Esophagus muscularis mucosa (tissue), 4 donors: ENCODE measurements at regions of chr20 and their contacts with region 1.

Region 1: GRCh38 chr20:1466211-1467081 is at the start of gene NSFL1C:
- DNase-seq: peak; percentile 96
- H3K4me3 ChIP-seq: peak within 1 kb of the TSS; percentile 77 to 95 (median 85)
- H3K27ac ChIP-seq: peak within 1 kb of the TSS; percentile 76 to 89 (median 83)
- H3K4me1 ChIP-seq: peaks cover 36 to 63% (median 51%) of the 10 kb centered on the region in 4 donors
- H3K27me3 ChIP-seq: no peaks in the 10 kb centered on the region
- CTCF ChIP-seq: peak in 2 of 3 experiments; percentile 93 to 96
- EP300 ChIP-seq: no peak
- POLR2A ChIP-seq: peak; percentile 43
- total RNA-seq, gene NSFL1C: 33.6 to 62.4 (median 43.6) TPM

Region 2: DNA sequence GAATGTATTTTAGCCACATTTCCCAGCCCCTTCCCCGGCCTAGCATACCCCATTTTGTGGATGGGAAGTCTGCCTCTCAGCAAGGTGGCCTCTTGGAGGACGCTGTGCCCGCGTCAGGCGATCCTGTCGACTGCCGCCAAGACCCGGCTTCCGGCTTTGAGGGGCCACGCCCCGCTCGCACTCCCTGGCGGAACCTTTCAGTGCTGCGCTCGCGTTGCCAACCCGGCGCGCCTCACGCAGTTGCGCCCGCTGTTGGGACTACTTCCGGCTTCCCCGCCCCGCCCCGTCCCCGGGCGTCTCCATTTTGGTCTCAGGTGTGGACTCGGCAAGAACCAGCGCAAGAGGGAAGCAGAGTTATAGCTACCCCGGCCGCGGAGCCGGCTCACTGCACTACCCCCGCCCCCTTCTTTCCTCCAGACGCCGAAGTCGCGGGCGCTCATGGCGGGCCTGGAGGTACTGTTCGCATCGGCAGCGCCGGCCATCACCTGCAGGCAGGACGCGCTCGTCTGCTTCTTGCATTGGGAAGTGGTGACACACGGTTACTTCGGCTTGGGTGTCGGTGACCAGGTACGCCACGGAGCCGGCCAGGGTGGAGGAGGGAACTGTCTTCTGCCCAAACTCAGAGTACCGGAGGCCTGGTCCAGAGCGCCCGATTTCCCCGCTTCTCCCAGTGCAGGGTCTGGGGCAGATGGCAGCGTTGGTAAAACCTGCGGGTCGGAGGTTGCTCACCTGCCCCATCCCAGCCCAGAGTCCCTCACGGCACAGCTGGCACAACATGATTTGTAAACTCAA is 347.9 kb before region 1 on chr20 and contains the start of gene PSMF1:
- intact Hi-C with region 1: loop called (anchors 5 kb)
- DNase-seq: peak; percentile 98
- H3K4me3 ChIP-seq: peak within 1 kb of the TSS; percentile 81 to 99 (median 89)
- H3K27ac ChIP-seq: peak within 1 kb of the TSS; percentile 75 to 83 (median 82)
- H3K4me1 ChIP-seq: peaks cover 51 to 54% (median 54%) of the 10 kb centered on the region in 4 donors
- H3K27me3 ChIP-seq: no peaks in the 10 kb centered on the region
- CTCF ChIP-seq: peak in 1 of 3 experiments; percentile 36
- EP300 ChIP-seq: no peak
- POLR2A ChIP-seq: no peak
- total RNA-seq, gene PSMF1: 65.4 to 91.5 (median 73.4) TPM

Region 3: DNA sequence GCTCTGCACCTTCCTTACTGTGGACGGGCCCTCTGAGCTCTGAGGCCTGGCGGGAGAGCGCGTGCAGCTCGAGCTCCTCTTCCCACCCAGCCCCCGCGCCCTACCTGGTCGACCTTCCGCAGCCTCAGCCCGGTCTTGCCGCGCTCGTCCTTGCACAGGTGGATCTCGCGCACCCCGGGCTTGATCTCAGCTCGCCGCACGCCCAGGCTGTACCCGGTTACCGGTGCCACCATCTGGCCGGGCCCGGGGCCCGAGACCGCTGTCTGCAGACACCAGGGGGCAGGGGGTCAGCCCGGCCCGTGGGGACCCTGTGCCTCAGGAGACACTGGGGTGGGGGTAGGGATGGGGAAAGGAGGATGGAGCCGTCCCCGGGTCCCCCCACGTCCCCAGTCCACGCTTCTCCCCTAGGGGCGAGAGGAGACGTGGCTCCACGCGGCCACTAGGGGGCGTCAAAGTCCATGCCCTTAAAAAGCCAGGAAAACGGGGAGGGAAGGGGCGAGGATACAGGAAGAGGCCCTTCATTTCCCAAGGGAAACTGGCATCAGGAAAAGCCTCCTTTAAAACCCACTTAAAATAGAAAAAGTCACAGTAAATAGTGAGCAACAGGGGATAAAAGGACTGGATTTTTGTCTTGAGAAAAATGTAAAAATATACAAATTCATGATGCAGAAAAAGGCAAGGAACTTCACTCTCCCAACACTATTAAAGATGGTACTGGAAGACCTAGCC is 153.0 kb before region 1 on chr20:
- intact Hi-C with region 1: loop called (anchors 2 kb)
- DNase-seq: peak; percentile 94
- H3K4me3 ChIP-seq: peak overlapping the region; percentile 34 to 52 (median 40)
- H3K27ac ChIP-seq: no peak overlapping the region
- H3K4me1 ChIP-seq: peaks cover 11 to 13% (median 12%) of the 10 kb centered on the region in 4 donors
- H3K27me3 ChIP-seq: no peaks in the 10 kb centered on the region
- CTCF ChIP-seq: peak; percentile 95 to 98 (median 97)
- EP300 ChIP-seq: no peak
- POLR2A ChIP-seq: no peak

Region 4: GRCh38 chr20:1325173-1326030 is 141.0 kb before region 1 on chr20:
- intact Hi-C with region 1: loop called (anchors 5 kb)
- DNase-seq: peak; percentile 99
- H3K4me3 ChIP-seq: peak overlapping the region; percentile 70 to 89 (median 78)
- H3K27ac ChIP-seq: peak overlapping the region; percentile 93 to 99 (median 96)
- H3K4me1 ChIP-seq: peaks cover 59 to 74% (median 66%) of the 10 kb centered on the region in 4 donors
- H3K27me3 ChIP-seq: peaks cover 0 to 9% (median 0%) of the 10 kb centered on the region in 4 donors
- CTCF ChIP-seq: peak in 2 of 3 experiments; percentile 25 to 40
- EP300 ChIP-seq: no peak
- POLR2A ChIP-seq: peak; percentile 94

Region 5: GRCh38 chr20:1392823-1393506 is 73.5 kb before region 1 on chr20 and contains the start of gene FKBP1A:
- intact Hi-C with region 1: loop called (anchors 5 kb)
- DNase-seq: peak; percentile 96
- H3K4me3 ChIP-seq: peak within 1 kb of the TSS; percentile 73 to 98 (median 80)
- H3K27ac ChIP-seq: peak within 1 kb of the TSS; percentile 79 to 89 (median 84)
- H3K4me1 ChIP-seq: peaks cover 40 to 53% (median 51%) of the 10 kb centered on the region in 4 donors
- H3K27me3 ChIP-seq: peaks cover 0 to 12% (median 0%) of the 10 kb centered on the region in 4 donors
- CTCF ChIP-seq: peak in 2 of 3 experiments; percentile 23 to 29
- EP300 ChIP-seq: no peak
- POLR2A ChIP-seq: peak; percentile 48
- total RNA-seq, gene FKBP1A: 84.3 to 99.2 (median 89.8) TPM

Region 6: GRCh38 chr20:1513801-1514200 is 47.4 kb after region 1 on chr20:
- intact Hi-C with region 1: no loop called
- DNase-seq: peak; percentile 91
- H3K4me3 ChIP-seq: no peak overlapping the region
- H3K27ac ChIP-seq: no peak overlapping the region
- H3K4me1 ChIP-seq: no peaks in the 10 kb centered on the region
- H3K27me3 ChIP-seq: peaks cover 0 to 11% (median 0%) of the 10 kb centered on the region in 4 donors
- CTCF ChIP-seq: no peak
- EP300 ChIP-seq: no peak
- POLR2A ChIP-seq: no peak

Region 7: GRCh38 chr20:1979106-1979779 is 512.8 kb after region 1 on chr20:
- intact Hi-C with region 1: no loop called
- DNase-seq: no peak
- H3K4me3 ChIP-seq: no peak overlapping the region
- H3K27ac ChIP-seq: no peak overlapping the region
- H3K4me1 ChIP-seq: no peaks in the 10 kb centered on the region
- H3K27me3 ChIP-seq: peaks cover 0 to 36% (median 0%) of the 10 kb centered on the region in 4 donors
- CTCF ChIP-seq: no peak
- EP300 ChIP-seq: no peak
- POLR2A ChIP-seq: no peak

Region 8: GRCh38 chr20:2470423-2471193 is 1004.2 kb after region 1 on chr20 and contains the start of gene SNRPB:
- intact Hi-C with region 1: loop called (anchors 10 kb)
- DNase-seq: peak; percentile 98
- H3K4me3 ChIP-seq: peak within 1 kb of the TSS; percentile 78 to 87 (median 82)
- H3K27ac ChIP-seq: peak within 1 kb of the TSS; percentile 91 to 95 (median 94)
- H3K4me1 ChIP-seq: peaks cover 25 to 35% (median 32%) of the 10 kb centered on the region in 4 donors
- H3K27me3 ChIP-seq: no peaks in the 10 kb centered on the region
- CTCF ChIP-seq: peak in 1 of 3 experiments; percentile 4
- EP300 ChIP-seq: no peak
- POLR2A ChIP-seq: peak; percentile 76
- total RNA-seq, gene SNRPB: 127 to 258 (median 216) TPM